HepG2 (cell line): ENCODE measurements at regions of chr6 and their contacts with region 1.

Region 1: GRCh38 chr6:43516697-43517504 is at the starts of genes POLR1C and YIPF3:
- DNase-seq: peak; percentile 98
- ATAC-seq: peak; percentile 90
- H3K4me3 ChIP-seq: peak within 1 kb of the TSS; percentile 85 to 99 (median 93)
- H3K27ac ChIP-seq: peak within 1 kb of the TSS; percentile 74
- H3K4me1 ChIP-seq: peaks cover 36% of the 10 kb centered on the region
- H3K27me3 ChIP-seq: peaks cover 0 to 5% of the 10 kb centered on the region in 2 experiments; a peak in 1 of 5 replicates
- CTCF ChIP-seq: no peak
- EP300 ChIP-seq: peak in 1 of 2 experiments; percentile 9; a peak in 1 of 4 replicates
- POLR2A ChIP-seq: peak in 1 of 2 experiments; percentile 97; a peak in 2 of 4 replicates
- RAD21 ChIP-seq: peak; percentile 37; the same call in 1 of the 2 replicates
- total RNA-seq, gene POLR1C: 72.2 and 75.6 TPM in 2 replicates
- total RNA-seq, gene YIPF3: 51.2 and 107 TPM in 2 replicates

Region 2: DNA sequence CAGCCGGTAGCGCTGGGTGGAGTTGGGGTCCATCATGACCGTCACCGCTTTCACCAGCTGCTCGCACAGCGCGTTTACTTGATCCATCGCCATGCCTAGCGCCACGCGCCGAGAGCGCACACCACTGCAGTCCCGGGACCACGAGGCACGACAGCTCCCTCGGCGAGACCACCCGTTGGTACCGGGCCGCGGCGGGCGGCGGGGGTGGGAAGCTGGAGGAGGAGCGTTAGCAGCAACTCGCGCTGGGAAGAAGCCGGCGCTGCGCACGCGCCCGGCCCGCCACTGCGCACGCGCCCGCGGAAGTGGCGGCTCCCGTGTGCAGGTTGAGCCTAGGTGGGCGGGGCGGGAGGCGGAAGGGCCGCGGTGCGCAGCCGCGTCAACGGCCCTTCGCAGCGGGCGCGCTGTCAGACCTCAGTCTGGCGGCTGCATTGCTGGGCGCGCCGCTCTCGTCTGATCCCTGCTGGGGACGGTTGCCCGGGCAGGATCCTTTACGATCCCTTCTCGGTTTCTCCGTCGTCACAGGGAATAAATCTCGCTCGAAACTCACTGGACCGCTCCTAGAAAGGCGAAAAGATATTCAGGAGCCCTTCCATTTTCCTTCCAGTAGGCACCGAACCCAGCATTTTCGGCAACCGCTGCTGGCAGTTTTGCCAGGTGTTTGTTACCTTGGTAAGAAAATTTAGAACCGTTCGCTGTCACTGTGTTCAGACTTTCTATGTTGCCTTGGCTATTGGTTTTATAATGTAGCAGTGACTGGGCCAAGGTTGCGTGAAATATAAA is 59.1 kb after region 1 on chr6 and contains the starts of genes POLH and XPO5:
- CTCF ChIA-PET with region 1: no interaction called
- POLR2A ChIA-PET with region 1: interaction called, 7 read pairs
- in situ Hi-C with region 1: no loop called
- intact Hi-C with region 1: loop called (anchors 5 kb)
- DNase-seq: peak; percentile 92
- ATAC-seq: peak; percentile 98
- H3K4me3 ChIP-seq: peak within 1 kb of the TSS; percentile 84 to 100 (median 97)
- H3K27ac ChIP-seq: peak within 1 kb of the TSS; percentile 71
- H3K4me1 ChIP-seq: peaks cover 34% of the 10 kb centered on the region
- H3K27me3 ChIP-seq: no peaks in the 10 kb centered on the region; a peak in 1 of 5 replicates
- CTCF ChIP-seq: peak; percentile 38; the same call in 1 of the 2 replicates
- EP300 ChIP-seq: peak in 1 of 2 experiments; percentile 6; a peak in 1 of 4 replicates
- POLR2A ChIP-seq: peak; percentile 98 to 99
- RAD21 ChIP-seq: peak; percentile 7; the same call in 1 of the 2 replicates
- total RNA-seq, gene POLH: 25.0 and 35.5 TPM in 2 replicates
- total RNA-seq, gene XPO5: 68.0 and 71.3 TPM in 2 replicates